Thyroid gland (tissue), 4 donors: ENCODE measurements at regions of chr2 and their contacts with region 1.

Region 1: DNA sequence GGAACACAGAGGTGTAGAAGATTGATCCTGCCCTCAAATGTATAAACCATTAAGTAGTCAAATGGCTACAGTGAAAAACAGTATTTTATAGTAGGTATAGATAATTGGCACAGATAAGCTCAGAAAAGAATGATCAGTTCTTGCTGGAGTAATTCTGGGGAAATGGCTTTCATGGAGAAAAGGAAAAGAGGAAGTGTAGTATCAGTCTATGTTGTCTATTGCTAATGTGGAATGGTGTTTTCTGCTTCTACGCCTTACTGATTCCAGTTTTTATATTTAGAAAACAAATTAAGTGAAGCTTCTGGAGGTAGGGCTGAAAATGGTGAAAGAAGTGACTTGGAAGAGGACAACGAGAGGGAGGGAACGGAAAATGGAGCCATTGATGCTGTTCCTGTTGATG is 22.2 kb downstream of the ZC3H15 start:
- DNase-seq: no peak
- H3K4me3 ChIP-seq: no peak overlapping the region
- H3K27ac ChIP-seq: peak overlapping the region in 1 of 3 donors; percentile 7
- H3K4me1 ChIP-seq: peaks cover 0 to 7% of the 10 kb centered on the region in 2 donors
- H3K27me3 ChIP-seq: no peaks in the 10 kb centered on the region
- CTCF ChIP-seq: no peak
- POLR2A ChIP-seq: no peak

Region 2: DNA sequence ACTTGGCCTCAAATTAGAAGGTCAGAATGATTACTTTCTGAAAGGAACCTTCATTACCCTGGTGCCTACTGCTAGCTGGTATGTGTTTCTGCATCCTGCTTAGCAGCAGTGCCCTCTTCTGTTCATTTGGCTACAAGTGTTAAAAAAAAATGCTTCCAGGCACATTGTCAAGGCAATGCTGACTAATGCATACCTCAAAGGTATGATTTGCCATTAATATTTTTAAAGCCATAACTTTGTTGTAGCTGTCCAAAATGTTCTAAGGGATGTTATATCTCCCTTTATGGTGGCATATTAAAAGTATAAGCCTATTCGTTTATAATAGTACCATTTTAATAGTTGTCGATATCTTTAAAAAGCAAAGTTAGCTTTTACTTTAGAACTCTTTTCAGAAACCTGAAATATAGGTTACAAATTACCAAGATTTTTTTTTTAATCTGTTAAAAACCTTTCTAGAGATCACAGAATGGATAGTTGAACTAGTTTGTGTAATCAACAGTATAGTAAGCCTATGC is 133.6 kb after region 1 on chr2:
- intact Hi-C with region 1: loop called (anchors 5 kb)
- DNase-seq: peak; percentile 33 to 48
- H3K4me3 ChIP-seq: no peak overlapping the region
- H3K27ac ChIP-seq: peak overlapping the region in 2 of 3 donors; percentile 26 to 52
- H3K4me1 ChIP-seq: peaks cover 0 to 4% of the 10 kb centered on the region in 2 donors
- H3K27me3 ChIP-seq: no peaks in the 10 kb centered on the region
- CTCF ChIP-seq: peak; percentile 30 to 89 (median 72)
- POLR2A ChIP-seq: no peak

Region 3: GRCh38 chr2:186687807-186688211 is 179.5 kb after region 1 on chr2:
- intact Hi-C with region 1: no loop called
- DNase-seq: no peak
- H3K4me3 ChIP-seq: no peak overlapping the region
- H3K27ac ChIP-seq: no peak overlapping the region
- H3K4me1 ChIP-seq: no peaks in the 10 kb centered on the region
- H3K27me3 ChIP-seq: no peaks in the 10 kb centered on the region
- CTCF ChIP-seq: no peak
- POLR2A ChIP-seq: no peak